ENCODE measurements at regions of chr17 and their contacts with region 1.

Region 1: DNA sequence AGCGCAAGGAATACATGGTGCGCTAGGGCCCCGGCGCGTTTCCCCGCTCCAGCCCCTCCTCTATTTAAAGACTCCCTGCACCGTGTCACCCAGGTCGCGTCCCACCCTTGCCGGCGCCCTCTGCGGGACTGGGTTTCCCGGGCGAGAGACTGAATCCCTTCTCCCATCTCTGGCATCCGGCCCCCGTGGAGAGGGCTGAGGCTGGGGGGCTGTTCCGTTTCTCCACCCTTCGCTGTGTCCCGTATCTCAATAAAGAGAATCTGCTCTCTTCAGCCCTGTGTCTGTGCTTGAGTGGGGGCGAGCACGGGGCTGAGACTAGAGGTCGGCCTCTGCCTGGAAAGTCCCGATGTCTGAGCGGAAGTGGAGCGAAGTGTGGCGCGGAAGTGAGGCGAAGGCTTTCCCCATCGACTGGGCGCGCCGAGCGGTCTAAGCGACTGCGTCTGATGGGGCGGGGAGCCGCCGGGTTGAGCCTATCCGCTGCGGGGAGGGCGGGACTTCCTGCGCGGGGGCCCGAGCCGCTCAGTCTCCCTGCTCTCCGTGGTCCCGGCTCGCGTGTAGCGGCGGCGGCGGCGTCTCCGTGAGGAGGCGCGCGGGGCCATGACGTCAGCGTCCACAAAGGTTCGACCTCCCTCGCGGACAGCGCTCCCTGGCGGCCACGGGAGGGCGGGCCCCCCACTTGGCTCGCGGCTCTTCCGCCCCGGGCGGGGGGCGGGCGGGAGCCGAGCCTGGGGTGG is 2.0 kb downstream of the RNASEK start:
- DNase-seq: peak; percentile 98
- H3K4me3 Mint-ChIP-seq: peak overlapping the region; percentile 93
- H3K27ac Mint-ChIP-seq: peak overlapping the region; percentile 100
- H3K4me1 Mint-ChIP-seq: peaks cover 50% of the 10 kb centered on the region
- H3K27me3 Mint-ChIP-seq: no peaks in the 10 kb centered on the region

Region 2: GRCh38 chr17:6443692-6444569 is 570.5 kb before region 1 on chr17 and contains the start of gene PIMREG:
- CTCF ChIA-PET with region 1: no interaction called
- intact Hi-C with region 1: loop called (anchors 5 kb)
- DNase-seq: peak; percentile 98
- H3K4me3 Mint-ChIP-seq: peak within 1 kb of the TSS; percentile 97
- H3K27ac Mint-ChIP-seq: peak within 1 kb of the TSS; percentile 92
- H3K4me1 Mint-ChIP-seq: peaks cover 11% of the 10 kb centered on the region
- H3K27me3 Mint-ChIP-seq: peaks cover 5% of the 10 kb centered on the region
- total RNA-seq, gene PIMREG: 18.1 to 19.0 TPM

Region 3: DNA sequence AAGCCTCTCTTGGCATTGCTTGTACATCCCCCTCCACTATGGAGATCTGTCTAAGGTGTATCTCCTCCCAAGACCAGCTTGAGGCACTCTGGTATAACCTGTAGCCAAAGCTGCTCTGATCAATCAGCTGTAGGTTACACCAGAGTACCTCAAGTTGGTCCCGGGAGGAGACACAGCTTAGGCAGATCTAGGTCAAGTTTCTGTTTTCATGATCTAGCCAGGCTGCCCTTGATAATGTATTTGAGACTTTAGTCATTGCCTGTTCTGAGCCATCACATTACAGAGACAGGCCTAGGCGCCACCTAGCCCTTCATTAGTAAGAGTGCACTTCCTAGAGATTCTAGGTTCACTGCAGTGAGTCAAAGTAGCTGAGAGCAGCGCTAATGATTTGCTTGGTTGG is 133.3 kb after region 1 on chr17:
- CTCF ChIA-PET with region 1: no interaction called
- intact Hi-C with region 1: no loop called
- DNase-seq: peak; percentile 9
- H3K4me3 Mint-ChIP-seq: no peak overlapping the region
- H3K27ac Mint-ChIP-seq: no peak overlapping the region
- H3K4me1 Mint-ChIP-seq: no peaks in the 10 kb centered on the region
- H3K27me3 Mint-ChIP-seq: peaks cover 2% of the 10 kb centered on the region

Measured in activated naive CD4-positive, alpha-beta T cell treated with anti-CD3 and anti-CD28 coated beads for 36 hours (primary cell).